Tibial artery (tissue), 4 donors: ENCODE measurements at regions of chr9 and their contacts with region 1.

Region 1: DNA sequence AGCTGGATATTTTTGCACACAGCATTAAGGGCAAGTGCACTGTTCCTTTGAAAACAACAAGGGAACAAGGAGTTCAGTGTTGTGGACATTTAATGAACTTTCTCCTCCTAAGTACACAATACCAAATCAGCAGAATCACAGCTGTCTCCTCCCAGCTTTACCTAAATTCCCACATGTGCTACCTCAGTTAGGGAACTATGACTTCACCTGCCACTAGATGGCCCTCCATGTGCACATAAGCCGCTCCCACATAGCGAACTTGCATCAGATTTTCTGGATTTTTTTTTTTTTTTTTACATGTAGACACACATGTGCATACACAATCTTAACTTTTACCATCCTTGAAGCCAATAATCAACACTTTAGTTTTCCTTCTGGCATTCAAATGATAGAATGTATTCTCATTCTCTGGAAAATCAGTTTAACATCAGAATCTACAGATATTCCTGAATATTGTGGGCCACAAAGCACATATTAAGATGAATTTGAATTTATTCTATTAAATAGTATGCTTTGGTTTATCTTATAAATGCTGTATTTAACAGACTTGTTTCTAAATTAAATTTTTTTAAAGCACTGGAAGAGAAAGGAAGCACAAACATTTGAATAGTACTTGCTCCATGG is 123.6 kb downstream of the PALM2AKAP2 start:
- DNase-seq: peak; percentile 64 to 70
- H3K4me3 ChIP-seq: no peak overlapping the region
- H3K27ac ChIP-seq: no peak overlapping the region
- H3K4me1 ChIP-seq: peaks cover 0 to 5% (median 0%) of the 10 kb centered on the region in 4 donors
- H3K27me3 ChIP-seq: no peaks in the 10 kb centered on the region
- CTCF ChIP-seq: peak; percentile 76 to 79

Region 2: DNA sequence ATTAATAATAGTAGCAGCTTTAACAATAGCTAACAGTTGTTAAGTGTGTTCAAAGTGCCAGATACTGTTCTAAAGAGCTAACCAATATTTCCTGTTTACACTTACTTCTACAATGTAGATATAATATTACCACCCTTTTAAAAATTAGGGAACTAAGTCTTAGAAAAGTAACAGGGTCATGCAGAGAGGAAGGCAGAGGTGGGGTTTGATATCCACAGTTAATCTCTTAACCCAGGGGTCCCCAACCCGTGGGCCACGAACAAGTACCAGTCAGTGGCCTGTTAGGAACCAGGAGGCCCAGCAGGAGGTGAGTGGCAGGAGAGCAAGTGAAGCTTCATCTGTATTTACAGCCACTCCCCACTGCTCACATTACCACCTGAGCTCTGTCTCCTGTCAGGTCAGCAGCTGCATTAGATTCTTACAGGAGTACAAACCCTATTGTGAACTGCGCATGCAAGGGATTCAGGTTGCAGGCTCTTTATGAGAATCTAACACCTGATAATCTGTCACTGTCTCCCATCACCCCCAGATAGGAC is 1136.9 kb before region 1 on chr9:
- intact Hi-C with region 1: no loop called
- DNase-seq: no peak
- H3K4me3 ChIP-seq: no peak overlapping the region
- H3K27ac ChIP-seq: no peak overlapping the region
- H3K4me1 ChIP-seq: no peaks in the 10 kb centered on the region
- H3K27me3 ChIP-seq: no peaks in the 10 kb centered on the region
- CTCF ChIP-seq: no peak

Region 3: DNA sequence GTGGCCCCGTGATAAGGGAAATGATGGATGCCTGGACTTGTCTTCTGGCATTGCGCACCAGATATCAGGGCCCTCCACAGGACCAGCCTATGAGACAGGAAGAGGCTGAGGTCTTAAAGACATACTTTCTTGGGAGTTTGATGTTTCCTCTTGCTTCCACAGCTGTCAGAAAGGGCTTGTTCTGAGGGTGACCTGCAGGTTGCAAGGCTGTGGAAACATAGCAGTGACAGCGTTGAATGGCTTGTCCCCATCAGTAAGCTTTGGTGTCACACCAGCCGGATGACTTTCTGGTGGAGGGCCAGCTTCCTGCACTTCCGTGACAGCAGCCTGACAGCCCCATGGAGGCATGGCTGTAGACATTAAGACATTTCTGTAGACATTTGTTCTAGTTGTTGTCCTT is 161.2 kb after region 1 on chr9:
- intact Hi-C with region 1: loop called (anchors 5 kb)
- DNase-seq: no peak
- H3K4me3 ChIP-seq: no peak overlapping the region
- H3K27ac ChIP-seq: no peak overlapping the region
- H3K4me1 ChIP-seq: peaks cover 0 to 37% (median 6%) of the 10 kb centered on the region in 4 donors
- H3K27me3 ChIP-seq: no peaks in the 10 kb centered on the region
- CTCF ChIP-seq: no peak

Region 4: DNA sequence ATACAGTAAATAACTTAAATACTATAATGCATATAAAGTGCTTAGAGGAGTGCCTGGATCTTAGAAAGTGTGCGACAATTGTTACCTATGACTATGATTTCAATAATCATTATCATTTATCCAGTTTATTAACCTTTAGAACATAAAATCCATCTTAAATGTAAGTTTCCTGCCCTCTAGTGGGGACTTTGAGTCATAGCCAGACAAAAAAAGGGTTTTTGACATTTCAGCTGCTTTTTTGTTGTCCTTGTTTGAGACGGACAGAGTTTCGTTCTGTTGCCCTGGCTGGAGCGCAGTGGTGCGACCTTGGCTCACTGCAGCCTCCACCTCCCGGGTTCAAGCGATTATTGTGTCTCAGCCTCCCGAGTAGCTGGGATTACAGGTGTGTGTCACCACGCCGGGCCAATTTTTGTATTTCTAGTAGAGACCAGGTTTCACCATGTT is 314.1 kb after region 1 on chr9:
- intact Hi-C with region 1: loop called (anchors 2 kb)
- DNase-seq: no peak
- H3K4me3 ChIP-seq: no peak overlapping the region
- H3K27ac ChIP-seq: no peak overlapping the region
- H3K4me1 ChIP-seq: no peaks in the 10 kb centered on the region
- H3K27me3 ChIP-seq: no peaks in the 10 kb centered on the region
- CTCF ChIP-seq: peak; percentile 71 to 76